Activated naive CD4-positive, alpha-beta T cell treated with anti-CD3 and anti-CD28 coated beads for 36 hours (primary cell): ENCODE measurements at regions of chr1 and their contacts with region 1.

Region 1: DNA sequence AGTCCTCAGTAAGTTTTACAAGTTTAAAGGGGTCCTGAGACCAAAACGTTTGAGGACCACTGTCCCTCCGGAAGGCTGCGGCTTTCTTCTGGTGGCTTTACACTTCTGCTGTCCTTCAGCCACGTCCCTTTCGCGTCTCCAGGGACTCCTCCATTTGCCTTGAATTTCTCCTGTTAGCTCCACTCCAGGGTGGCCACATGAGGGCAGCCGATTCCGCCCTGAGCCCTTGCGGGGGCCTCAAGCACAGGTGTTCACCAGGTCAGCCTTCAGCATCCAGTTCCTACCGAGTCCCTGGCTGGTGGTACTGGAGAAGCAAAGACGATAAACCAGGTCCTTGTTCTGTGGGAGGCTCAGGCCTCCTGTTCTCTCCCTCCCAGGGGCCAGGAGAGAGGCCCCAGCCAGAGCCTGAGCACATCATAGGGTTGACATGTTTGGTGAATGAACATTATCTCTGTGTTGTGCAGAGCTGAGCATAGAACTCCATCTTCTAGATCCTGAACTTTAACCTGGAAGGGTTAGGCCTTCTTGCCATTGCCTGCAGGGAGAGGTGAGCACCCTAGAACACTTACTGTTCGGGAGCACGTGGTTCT is 27.4 kb upstream of the COQ8A start:
- DNase-seq: peak; percentile 71
- H3K4me3 Mint-ChIP-seq: no peak overlapping the region
- H3K27ac Mint-ChIP-seq: no peak overlapping the region
- H3K4me1 Mint-ChIP-seq: no peaks in the 10 kb centered on the region
- H3K27me3 Mint-ChIP-seq: peaks cover 4% of the 10 kb centered on the region

Region 2: DNA sequence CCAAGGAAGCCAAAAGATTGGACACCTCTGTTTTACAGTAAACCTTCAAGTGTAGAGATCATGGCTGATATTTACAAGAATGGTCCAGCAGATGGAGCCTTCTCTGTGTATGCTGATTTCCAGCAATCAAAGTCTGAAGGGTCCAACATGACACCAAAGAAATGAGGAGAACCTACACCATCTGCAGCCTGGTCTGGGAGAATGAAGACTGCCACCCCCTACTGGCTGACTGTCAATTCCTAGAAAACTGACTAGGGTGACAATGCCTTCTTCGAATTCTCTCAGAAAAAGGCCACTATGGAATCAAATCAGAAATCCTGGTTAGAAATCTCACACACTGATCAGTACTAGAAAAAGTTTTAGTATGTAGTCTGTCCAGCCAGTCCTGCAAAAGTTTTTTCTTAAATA is 322.3 kb after region 1 on chr1:
- CTCF ChIA-PET with region 1: no interaction called
- intact Hi-C with region 1: loop called (anchors 5 kb)
- DNase-seq: peak; percentile 27
- H3K4me3 Mint-ChIP-seq: no peak overlapping the region
- H3K27ac Mint-ChIP-seq: no peak overlapping the region
- H3K4me1 Mint-ChIP-seq: no peaks in the 10 kb centered on the region
- H3K27me3 Mint-ChIP-seq: peaks cover 21% of the 10 kb centered on the region